GM12878 (cell line): ENCODE measurements at regions of chr1 and their contacts with region 1.

Region 1: GRCh38 chr1:53278201-53278725 is 39.9 kb upstream of the MAGOH start:
- DNase-seq: no peak
- ATAC-seq: peak; percentile 92
- H3K4me3 ChIP-seq: no peak overlapping the region
- H3K27ac ChIP-seq: no peak overlapping the region
- H3K4me1 ChIP-seq: no peaks in the 10 kb centered on the region
- H3K27me3 ChIP-seq: no peaks in the 10 kb centered on the region
- CTCF ChIP-seq: peak; percentile 76 to 92 (median 87)
- EP300 ChIP-seq: no peak
- POLR2A ChIP-seq: no peak
- RAD21 ChIP-seq: peak; percentile 77

Region 2: GRCh38 chr1:53266106-53266505 is 12.2 kb before region 1 on chr1:
- CTCF ChIA-PET with region 1: interaction called, 16 read pairs
- POLR2A ChIA-PET with region 1: no interaction called
- RAD21 ChIA-PET with region 1: interaction called, 5 read pairs
- SMC1A ChIA-PET with region 1: interaction called, 3 read pairs
- in situ Hi-C with region 1: no loop called
- intact Hi-C with region 1: no loop called
- DNase-seq: no peak
- ATAC-seq: peak; percentile 43; the same call in 2 of the 3 replicates
- H3K4me3 ChIP-seq: no peak overlapping the region
- H3K27ac ChIP-seq: no peak overlapping the region
- H3K4me1 ChIP-seq: no peaks in the 10 kb centered on the region
- H3K27me3 ChIP-seq: no peaks in the 10 kb centered on the region
- CTCF ChIP-seq: peak; percentile 22 to 25 (median 23); a peak in 4 of 6 replicates
- EP300 ChIP-seq: no peak
- POLR2A ChIP-seq: no peak
- RAD21 ChIP-seq: peak; percentile 33

Region 3: GRCh38 chr1:53294567-53294966 is 16.3 kb after region 1 on chr1:
- CTCF ChIA-PET with region 1: interaction called, 14 read pairs
- POLR2A ChIA-PET with region 1: interaction called, 6 read pairs
- RAD21 ChIA-PET with region 1: interaction called, 7 read pairs
- SMC1A ChIA-PET with region 1: interaction called, 26 read pairs
- in situ Hi-C with region 1: no loop called
- intact Hi-C with region 1: no loop called
- DNase-seq: no peak
- ATAC-seq: no peak
- H3K4me3 ChIP-seq: no peak overlapping the region
- H3K27ac ChIP-seq: peak overlapping the region; percentile 77
- H3K4me1 ChIP-seq: peaks cover 51% of the 10 kb centered on the region
- H3K27me3 ChIP-seq: no peaks in the 10 kb centered on the region
- CTCF ChIP-seq: no peak
- EP300 ChIP-seq: no peak
- POLR2A ChIP-seq: no peak
- RAD21 ChIP-seq: no peak

Region 4: DNA sequence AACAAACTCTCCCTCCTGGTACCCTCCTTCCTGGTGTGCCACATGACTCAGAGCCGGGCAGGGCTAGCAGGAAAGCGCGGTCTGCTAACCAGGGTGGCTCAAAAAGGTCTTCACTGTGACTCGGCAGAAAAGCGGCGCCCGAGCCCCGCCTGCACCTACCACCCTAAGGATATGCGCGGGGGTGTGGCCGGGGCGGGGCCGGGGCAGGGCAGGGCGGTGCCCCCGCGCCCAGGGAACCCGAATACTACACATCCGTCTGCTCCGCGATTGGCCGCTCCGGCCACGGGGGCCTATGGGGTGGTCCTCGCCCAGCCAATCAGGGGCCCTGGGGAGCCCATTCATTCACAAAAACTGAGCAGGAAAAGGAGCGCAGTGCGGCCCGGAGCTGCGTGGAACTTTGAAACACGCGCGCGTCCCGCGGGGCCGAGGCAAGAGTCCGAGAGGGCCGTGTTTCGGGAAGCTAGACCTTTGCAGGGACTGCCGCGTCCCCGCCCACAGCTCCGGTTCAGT is 47.9 kb after region 1 on chr1:
- CTCF ChIA-PET with region 1: interaction called, 8 read pairs
- POLR2A ChIA-PET with region 1: no interaction called
- RAD21 ChIA-PET with region 1: interaction called, 3 read pairs
- SMC1A ChIA-PET with region 1: interaction called, 9 read pairs
- in situ Hi-C with region 1: no loop called
- intact Hi-C with region 1: loop called (anchors 2 kb)
- DNase-seq: peak; percentile 73
- ATAC-seq: peak; percentile 95
- H3K4me3 ChIP-seq: peak overlapping the region; percentile 100
- H3K27ac ChIP-seq: peak overlapping the region; percentile 79
- H3K4me1 ChIP-seq: peaks cover 13% of the 10 kb centered on the region
- H3K27me3 ChIP-seq: no peaks in the 10 kb centered on the region
- CTCF ChIP-seq: no peak; a peak in 1 of 6 replicates
- EP300 ChIP-seq: no peak
- POLR2A ChIP-seq: peak; percentile 83
- RAD21 ChIP-seq: no peak

Region 5: DNA sequence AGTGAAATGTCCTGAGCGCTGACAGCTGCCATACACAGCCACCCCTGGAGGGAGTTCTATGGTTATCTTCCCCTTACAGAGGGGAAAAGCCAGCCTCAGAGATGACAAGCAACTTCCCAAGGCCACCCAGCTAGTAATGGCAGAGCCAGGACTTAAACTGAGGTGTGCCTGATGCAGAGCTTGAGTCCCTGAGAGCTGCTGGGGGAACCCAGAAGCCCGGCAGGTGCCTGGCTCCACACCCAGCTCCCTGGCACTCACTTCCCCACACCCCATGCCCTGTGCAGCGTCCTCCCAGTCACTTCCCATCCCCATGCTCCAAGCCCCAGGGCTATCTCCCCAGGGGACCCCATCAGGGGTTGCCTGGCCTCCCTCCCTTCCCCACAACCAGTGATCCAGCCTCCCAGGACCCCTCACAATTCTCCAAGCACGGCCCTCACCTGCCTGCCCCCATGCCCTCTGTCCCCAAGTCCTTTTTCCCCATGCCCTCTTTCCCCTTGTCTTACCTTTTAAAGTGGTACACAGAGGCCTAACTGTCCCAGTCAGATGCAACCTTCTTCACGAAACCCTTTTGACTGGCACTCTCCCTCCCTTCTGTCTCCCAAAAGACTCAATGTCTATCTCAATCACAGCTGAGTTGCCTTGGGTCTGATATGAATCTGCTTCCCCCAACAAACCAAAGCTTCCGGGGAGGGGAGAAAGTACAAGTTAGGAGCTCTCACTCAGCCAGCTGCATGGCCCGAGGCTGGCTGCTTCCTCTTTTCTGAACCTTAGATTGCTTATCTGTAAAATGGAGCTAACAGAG is 89.4 kb after region 1 on chr1:
- CTCF ChIA-PET with region 1: interaction called, 20 read pairs
- POLR2A ChIA-PET with region 1: no interaction called
- RAD21 ChIA-PET with region 1: interaction called, 4 read pairs
- SMC1A ChIA-PET with region 1: interaction called, 3 read pairs
- in situ Hi-C with region 1: no loop called
- intact Hi-C with region 1: no loop called
- DNase-seq: peak; percentile 64
- ATAC-seq: peak; percentile 96
- H3K4me3 ChIP-seq: peak overlapping the region; percentile 66
- H3K27ac ChIP-seq: peak overlapping the region; percentile 53
- H3K4me1 ChIP-seq: peaks cover 8% of the 10 kb centered on the region
- H3K27me3 ChIP-seq: no peaks in the 10 kb centered on the region
- CTCF ChIP-seq: no peak
- EP300 ChIP-seq: no peak
- POLR2A ChIP-seq: peak; percentile 54; the same call in 1 of the 2 replicates
- RAD21 ChIP-seq: no peak

Region 6: DNA sequence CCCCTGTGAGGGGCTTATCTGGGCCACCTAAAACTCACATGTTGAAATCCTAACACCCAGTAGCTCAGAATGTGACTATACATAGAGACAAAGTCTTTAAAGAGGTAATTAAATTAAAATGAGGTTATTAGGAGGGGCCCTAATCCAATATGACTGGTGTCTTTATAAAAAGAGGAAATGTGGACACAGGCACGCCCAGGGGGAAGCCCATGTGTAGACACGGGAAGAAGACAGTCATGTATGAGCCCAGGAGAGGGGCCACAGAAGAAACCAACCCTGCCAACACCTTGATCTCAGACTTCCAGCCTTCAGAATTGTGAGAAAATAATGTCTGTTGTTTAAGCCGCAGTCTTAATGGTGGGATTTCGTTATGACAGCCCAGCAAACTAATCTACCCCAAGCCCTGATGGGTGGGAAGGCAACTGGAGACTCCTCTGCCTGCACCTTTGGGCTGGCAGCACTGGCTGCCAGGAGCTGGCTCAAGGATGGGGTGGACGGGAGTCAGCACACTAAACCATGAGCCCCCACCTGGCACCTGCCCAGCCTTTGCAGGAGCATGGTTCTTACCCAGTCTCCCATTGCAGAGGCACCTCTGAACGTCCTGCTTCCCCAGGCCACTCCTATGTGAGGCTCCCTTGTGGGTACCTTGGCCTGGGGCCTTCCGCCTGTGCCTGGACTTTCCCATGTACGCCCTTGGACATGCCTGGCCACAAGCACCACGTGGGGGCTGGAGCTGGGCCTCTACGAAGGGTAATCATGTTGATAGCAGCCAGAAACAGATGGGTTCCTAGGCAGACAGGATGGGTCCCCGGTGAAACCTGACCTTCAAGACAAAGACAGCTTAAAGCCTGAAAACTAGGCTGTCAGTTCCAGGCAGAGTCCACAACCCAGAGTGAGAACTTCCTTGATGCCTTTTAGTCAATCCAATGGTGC is 123.8 kb after region 1 on chr1:
- CTCF ChIA-PET with region 1: interaction called, 185 read pairs
- POLR2A ChIA-PET with region 1: no interaction called
- RAD21 ChIA-PET with region 1: interaction called, 3 read pairs
- SMC1A ChIA-PET with region 1: interaction called, 107 read pairs
- in situ Hi-C with region 1: no loop called
- intact Hi-C with region 1: no loop called
- DNase-seq: no peak
- ATAC-seq: peak; percentile 62
- H3K4me3 ChIP-seq: no peak overlapping the region
- H3K27ac ChIP-seq: no peak overlapping the region
- H3K4me1 ChIP-seq: no peaks in the 10 kb centered on the region; the same call in 1 of the 2 replicates
- H3K27me3 ChIP-seq: peaks cover 1 to 2% of the 10 kb centered on the region in 2 experiments; a peak in 3 of 4 replicates
- CTCF ChIP-seq: no peak
- EP300 ChIP-seq: no peak
- POLR2A ChIP-seq: no peak
- RAD21 ChIP-seq: no peak

Region 7: GRCh38 chr1:53408013-53408754 is 129.9 kb after region 1 on chr1:
- CTCF ChIA-PET with region 1: interaction called, 11 read pairs
- POLR2A ChIA-PET with region 1: no interaction called
- RAD21 ChIA-PET with region 1: interaction called, 5 read pairs
- SMC1A ChIA-PET with region 1: interaction called, 5 read pairs
- in situ Hi-C with region 1: no loop called
- intact Hi-C with region 1: no loop called
- DNase-seq: no peak
- ATAC-seq: peak; percentile 42
- H3K4me3 ChIP-seq: no peak overlapping the region
- H3K27ac ChIP-seq: no peak overlapping the region
- H3K4me1 ChIP-seq: peaks cover 29% of the 10 kb centered on the region
- H3K27me3 ChIP-seq: no peaks in the 10 kb centered on the region
- CTCF ChIP-seq: no peak
- EP300 ChIP-seq: no peak
- POLR2A ChIP-seq: no peak
- RAD21 ChIP-seq: no peak